ENCODE measurements at regions of chr11 and their contacts with region 1.

Region 1: DNA sequence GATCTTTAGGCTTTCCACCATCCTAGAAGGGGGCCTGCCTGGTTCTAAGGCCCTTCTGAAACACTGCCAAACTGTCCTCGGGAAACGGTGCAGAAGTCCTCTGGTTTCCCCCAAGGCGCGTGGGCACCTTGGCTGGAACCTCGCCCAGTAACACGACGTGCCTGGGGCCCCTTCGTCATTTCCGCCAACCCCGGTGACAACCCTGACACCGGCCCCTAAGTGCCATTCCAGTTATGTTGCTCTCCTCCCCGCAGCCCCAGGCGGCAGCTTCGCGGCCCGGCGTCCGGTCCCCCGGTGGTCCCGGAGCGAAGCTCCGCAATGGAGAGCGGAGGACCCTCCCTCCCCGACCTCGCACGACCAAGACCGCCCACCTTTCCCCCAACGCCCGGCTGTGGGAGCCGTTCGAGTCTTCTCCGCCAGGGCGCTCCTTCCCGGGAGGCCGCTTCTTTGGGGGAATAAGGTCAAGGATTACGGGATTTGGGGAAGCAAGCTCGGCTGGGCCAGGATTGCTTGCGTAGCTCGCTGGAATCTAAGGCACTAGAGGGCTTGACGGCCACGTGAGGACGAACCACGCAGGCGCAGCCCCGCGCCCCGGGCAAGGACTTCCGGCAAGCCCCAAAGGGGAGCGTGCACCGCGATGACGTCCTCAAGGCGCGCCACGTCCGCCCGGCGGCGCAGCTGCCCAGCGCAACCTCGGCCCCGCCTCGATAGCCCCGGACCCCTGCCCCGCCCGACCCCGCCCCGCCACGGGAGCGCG is 626 bp downstream of the RNH1 start:
- DNase-seq: peak; percentile 98
- H3K4me3 Mint-ChIP-seq: peak overlapping the region; percentile 92
- H3K27ac Mint-ChIP-seq: peak overlapping the region; percentile 99
- H3K4me1 Mint-ChIP-seq: peaks cover 22% of the 10 kb centered on the region
- H3K27me3 Mint-ChIP-seq: no peaks in the 10 kb centered on the region

Region 2: GRCh38 chr11:236774-237767 is 269.3 kb before region 1 on chr11 and contains the start of gene PSMD13:
- CTCF ChIA-PET with region 1: no interaction called
- intact Hi-C with region 1: loop called (anchors 2 kb)
- DNase-seq: peak; percentile 89
- H3K4me3 Mint-ChIP-seq: peak within 1 kb of the TSS; percentile 85
- H3K27ac Mint-ChIP-seq: peak within 1 kb of the TSS; percentile 95
- H3K4me1 Mint-ChIP-seq: peaks cover 45% of the 10 kb centered on the region
- H3K27me3 Mint-ChIP-seq: no peaks in the 10 kb centered on the region
- total RNA-seq, gene PSMD13: 206 to 210 TPM

Region 3: DNA sequence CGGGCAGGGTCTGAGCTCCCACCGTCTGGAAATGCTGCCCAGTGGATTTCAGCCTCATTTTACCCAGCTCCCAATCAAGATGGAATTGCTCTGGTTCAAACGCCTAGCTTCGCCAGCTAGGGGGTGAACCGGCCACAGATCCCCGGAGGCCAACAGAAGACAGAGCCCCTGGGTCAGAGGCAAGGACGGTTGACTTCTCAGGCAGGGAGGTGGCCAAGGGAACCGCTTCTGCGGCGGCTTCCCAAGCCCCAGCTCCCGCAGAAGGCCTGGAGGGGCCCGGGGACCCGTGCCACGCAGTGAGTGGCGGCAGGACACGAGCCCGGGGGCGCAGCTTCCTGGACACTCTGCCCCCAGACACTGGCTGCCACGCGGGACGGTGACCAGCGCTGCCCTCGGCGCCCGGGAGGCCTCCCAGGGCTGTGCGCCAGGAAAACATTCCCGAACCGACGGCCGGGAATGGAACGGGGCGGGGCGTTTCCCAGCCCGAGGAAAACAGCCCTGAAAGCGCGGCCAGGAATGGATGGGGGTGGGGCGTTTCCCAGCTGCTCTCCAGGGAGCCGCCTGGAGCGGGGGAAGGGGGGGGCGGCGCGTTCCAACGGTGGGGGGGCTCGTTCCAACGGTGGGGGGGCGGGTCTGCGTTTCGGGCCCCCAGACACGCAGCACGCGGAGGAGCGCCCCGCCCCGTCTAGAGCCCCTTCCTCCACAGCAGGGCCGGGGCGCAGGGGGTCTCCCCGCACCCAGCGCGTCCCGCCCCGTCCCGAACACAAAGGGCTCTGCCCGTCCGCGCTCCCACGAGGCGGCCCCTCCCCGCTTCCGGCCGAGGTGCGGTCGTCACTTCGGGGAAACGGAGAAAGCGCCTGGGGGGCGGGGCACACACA is 150.6 kb before region 1 on chr11:
- CTCF ChIA-PET with region 1: no interaction called
- intact Hi-C with region 1: loop called (anchors 2 kb)
- DNase-seq: peak; percentile 93
- H3K4me3 Mint-ChIP-seq: peak overlapping the region; percentile 94
- H3K27ac Mint-ChIP-seq: peak overlapping the region; percentile 99
- H3K4me1 Mint-ChIP-seq: peaks cover 36% of the 10 kb centered on the region
- H3K27me3 Mint-ChIP-seq: no peaks in the 10 kb centered on the region

Region 4: GRCh38 chr11:447923-448731 is 58.3 kb before region 1 on chr11:
- CTCF ChIA-PET with region 1: interaction called, 3 read pairs
- intact Hi-C with region 1: loop called (anchors 1 kb)
- DNase-seq: peak; percentile 97
- H3K4me3 Mint-ChIP-seq: peak overlapping the region; percentile 93
- H3K27ac Mint-ChIP-seq: peak overlapping the region; percentile 95
- H3K4me1 Mint-ChIP-seq: peaks cover 24% of the 10 kb centered on the region
- H3K27me3 Mint-ChIP-seq: no peaks in the 10 kb centered on the region

Region 5: GRCh38 chr11:560305-561147 is 54.1 kb after region 1 on chr11 and contains the starts of genes LMNTD2 and RASSF7:
- CTCF ChIA-PET with region 1: no interaction called
- intact Hi-C with region 1: loop called (anchors 2 kb)
- DNase-seq: peak; percentile 95
- H3K4me3 Mint-ChIP-seq: peak within 1 kb of the TSS; percentile 84
- H3K27ac Mint-ChIP-seq: peak within 1 kb of the TSS; percentile 76
- H3K4me1 Mint-ChIP-seq: peaks cover 12% of the 10 kb centered on the region
- H3K27me3 Mint-ChIP-seq: peaks cover 3% of the 10 kb centered on the region
- total RNA-seq, gene LMNTD2: 4.5 to 5.2 TPM
- total RNA-seq, gene RASSF7: 8.3 to 9.9 TPM

Region 6: DNA sequence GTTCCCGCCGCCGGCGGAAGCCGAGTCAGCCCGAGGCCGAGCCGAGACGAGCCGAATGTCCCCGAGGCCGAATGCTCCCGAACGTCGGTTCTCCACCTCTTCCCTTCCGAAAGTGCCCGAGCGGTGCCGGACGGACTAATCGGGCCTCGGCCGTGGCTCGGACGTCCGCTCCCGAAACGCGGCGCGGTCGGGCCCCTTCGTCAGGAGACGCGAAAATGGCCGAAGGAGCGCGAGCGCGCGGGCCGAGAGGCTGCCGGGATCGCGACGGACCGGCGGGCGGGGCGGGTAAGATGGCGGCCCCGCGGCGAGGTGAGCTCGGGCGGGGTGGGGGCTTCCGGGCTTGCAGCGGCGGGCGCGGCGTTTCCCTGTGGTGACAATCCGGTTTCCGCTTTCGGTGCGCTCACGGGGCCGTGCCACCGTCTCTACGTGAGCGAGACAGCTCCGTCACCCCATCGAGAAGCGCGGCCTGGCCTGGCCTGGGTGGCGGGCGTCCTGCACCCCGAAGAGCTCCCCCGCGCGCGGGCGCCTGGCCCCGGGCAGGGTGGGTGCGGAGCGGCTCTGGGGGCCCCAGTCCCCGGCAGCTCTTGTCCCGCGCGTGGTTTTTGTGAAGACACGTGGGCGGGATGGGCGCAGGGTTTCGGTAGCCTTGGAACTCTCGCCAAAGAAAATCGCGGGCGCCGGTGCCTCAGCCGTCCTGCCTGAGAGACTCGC is 189.3 kb after region 1 on chr11 and contains the start of gene TMEM80:
- CTCF ChIA-PET with region 1: no interaction called
- intact Hi-C with region 1: loop called (anchors 1 kb)
- DNase-seq: peak; percentile 99
- H3K4me3 Mint-ChIP-seq: peak within 1 kb of the TSS; percentile 83
- H3K27ac Mint-ChIP-seq: peak within 1 kb of the TSS; percentile 93
- H3K4me1 Mint-ChIP-seq: peaks cover 54% of the 10 kb centered on the region
- H3K27me3 Mint-ChIP-seq: no peaks in the 10 kb centered on the region
- total RNA-seq, gene TMEM80: 5.6 to 6.0 TPM

Region 7: DNA sequence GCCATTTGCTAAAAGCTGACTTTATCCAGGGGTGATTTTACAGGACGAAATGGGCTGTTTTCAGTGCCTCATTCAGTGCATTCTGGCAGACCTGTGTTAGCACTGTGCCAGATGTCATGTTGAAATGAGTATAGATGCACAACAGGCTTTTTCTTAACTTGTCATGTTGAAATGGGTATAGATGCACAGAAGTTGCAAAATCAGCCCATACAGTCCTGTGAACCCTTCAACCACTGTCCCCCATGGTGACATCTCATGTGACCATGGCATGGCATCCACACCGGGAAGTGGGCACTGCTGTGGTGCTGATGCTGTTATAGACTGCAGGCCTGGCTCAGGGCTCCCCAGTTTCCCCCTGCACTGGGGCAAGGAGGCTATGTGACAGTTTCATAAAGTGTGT is 243.3 kb after region 1 on chr11:
- CTCF ChIA-PET with region 1: no interaction called
- intact Hi-C with region 1: no loop called
- DNase-seq: no peak
- H3K4me3 Mint-ChIP-seq: peak overlapping the region; percentile 47
- H3K27ac Mint-ChIP-seq: peak overlapping the region; percentile 24
- H3K4me1 Mint-ChIP-seq: peaks cover 21% of the 10 kb centered on the region
- H3K27me3 Mint-ChIP-seq: no peaks in the 10 kb centered on the region

Measured in activated naive CD4-positive, alpha-beta T cell treated with anti-CD3 and anti-CD28 coated beads for 36 hours (primary cell).